ENCODE measurements at regions of chr1 and their contacts with region 1.

Region 1: GRCh38 chr1:109499661-109500536 is 6.0 kb downstream of the CYB561D1 start:
- DNase-seq: peak; percentile 44
- H3K4me3 ChIP-seq: no peak overlapping the region
- H3K27ac ChIP-seq: no peak overlapping the region
- H3K4me1 ChIP-seq: no peaks in the 10 kb centered on the region
- H3K27me3 ChIP-seq: no peaks in the 10 kb centered on the region
- CTCF ChIP-seq: peak; percentile 60

Region 2: GRCh38 chr1:109404838-109405237 is 95.1 kb before region 1 on chr1:
- CTCF ChIA-PET with region 1: no interaction called
- POLR2A ChIA-PET with region 1: no interaction called
- intact Hi-C with region 1: no loop called
- DNase-seq: no peak
- H3K4me3 ChIP-seq: no peak overlapping the region
- H3K27ac ChIP-seq: no peak overlapping the region
- H3K4me1 ChIP-seq: no peaks in the 10 kb centered on the region
- H3K27me3 ChIP-seq: no peaks in the 10 kb centered on the region
- CTCF ChIP-seq: no peak

Region 3: DNA sequence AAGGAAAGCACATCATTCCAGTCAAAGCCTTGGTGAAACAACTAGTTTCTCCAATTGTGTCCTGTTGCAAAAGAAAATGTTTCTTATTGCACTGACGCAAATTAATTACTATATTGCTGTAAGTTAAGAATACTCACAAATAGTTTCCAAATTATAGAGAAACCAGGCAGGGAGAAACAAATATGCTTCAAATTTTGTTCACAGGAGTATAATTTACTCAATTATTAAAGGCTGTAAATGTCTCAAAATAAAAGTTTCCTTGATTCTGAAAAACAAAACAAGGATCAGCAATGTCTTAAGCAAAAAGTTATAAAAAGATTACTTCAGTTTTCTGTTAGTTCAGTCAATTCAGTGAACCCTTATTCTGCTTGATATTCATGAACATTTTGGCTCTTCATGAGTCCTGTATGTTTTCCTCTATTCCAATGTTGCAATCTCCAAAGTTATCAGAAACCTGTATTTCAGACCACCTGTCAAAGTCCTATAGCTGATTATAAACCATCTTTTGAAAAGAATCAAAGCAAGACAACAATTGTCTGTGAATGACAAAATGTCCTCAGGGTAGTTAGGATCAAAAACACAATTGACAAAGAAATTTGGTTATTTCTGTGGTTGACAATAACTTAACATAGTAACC is 45.3 kb before region 1 on chr1:
- CTCF ChIA-PET with region 1: no interaction called
- POLR2A ChIA-PET with region 1: no interaction called
- intact Hi-C with region 1: no loop called
- DNase-seq: no peak
- H3K4me3 ChIP-seq: no peak overlapping the region
- H3K27ac ChIP-seq: no peak overlapping the region
- H3K4me1 ChIP-seq: no peaks in the 10 kb centered on the region
- H3K27me3 ChIP-seq: peaks cover 36% of the 10 kb centered on the region
- CTCF ChIP-seq: no peak

Region 4: GRCh38 chr1:109478806-109479710 is 20.8 kb before region 1 on chr1:
- CTCF ChIA-PET with region 1: interaction called, 10 read pairs
- POLR2A ChIA-PET with region 1: no interaction called
- intact Hi-C with region 1: no loop called
- DNase-seq: no peak
- H3K4me3 ChIP-seq: no peak overlapping the region
- H3K27ac ChIP-seq: no peak overlapping the region
- H3K4me1 ChIP-seq: no peaks in the 10 kb centered on the region
- H3K27me3 ChIP-seq: peaks cover 53% of the 10 kb centered on the region
- CTCF ChIP-seq: no peak